ENCODE measurements at regions of chr9 and their contacts with region 1.

Region 1: GRCh38 chr9:80503671-80504281 is 932.0 kb downstream of the TLE4 start:
- DNase-seq: no peak
- ATAC-seq: peak in 2 of 4 donors; percentile 48 to 65
- H3K4me3 ChIP-seq: no peak overlapping the region
- H3K27ac ChIP-seq: peak overlapping the region in 6 of 12 donors; percentile 39 to 64 (median 51)
- H3K4me1 ChIP-seq: peaks cover 0 to 20% (median 3%) of the 10 kb centered on the region in 12 donors
- H3K27me3 ChIP-seq: no peaks in the 10 kb centered on the region
- CTCF ChIP-seq: no peak
- POLR2A ChIP-seq: no peak

Region 2: GRCh38 chr9:80561526-80561925 is 57.8 kb after region 1 on chr9:
- intact Hi-C with region 1: loop called in 1 of 10 experiments (anchors 10 kb)
- DNase-seq: no peak
- ATAC-seq: no peak
- H3K4me3 ChIP-seq: no peak overlapping the region
- H3K27ac ChIP-seq: no peak overlapping the region
- H3K4me1 ChIP-seq: no peaks in the 10 kb centered on the region
- H3K27me3 ChIP-seq: no peaks in the 10 kb centered on the region
- CTCF ChIP-seq: no peak
- POLR2A ChIP-seq: no peak